Dorsolateral prefrontal cortex (tissue), 120 donors: ENCODE measurements at regions of chr15 and their contacts with region 1.

Region 1: GRCh38 chr15:52139599-52140491 is 27.3 kb upstream of the BCL2L10 start:
- DNase-seq: peak; percentile 69 to 88 (median 78)
- H3K4me3 ChIP-seq: no peak overlapping the region
- H3K27ac ChIP-seq: peak overlapping the region in 16 of 59 donors; percentile 4 to 57 (median 30)
- H3K27me3 ChIP-seq: no peaks in the 10 kb centered on the region
- CTCF ChIP-seq: peak; percentile 70 to 91 (median 82)

Region 2: DNA sequence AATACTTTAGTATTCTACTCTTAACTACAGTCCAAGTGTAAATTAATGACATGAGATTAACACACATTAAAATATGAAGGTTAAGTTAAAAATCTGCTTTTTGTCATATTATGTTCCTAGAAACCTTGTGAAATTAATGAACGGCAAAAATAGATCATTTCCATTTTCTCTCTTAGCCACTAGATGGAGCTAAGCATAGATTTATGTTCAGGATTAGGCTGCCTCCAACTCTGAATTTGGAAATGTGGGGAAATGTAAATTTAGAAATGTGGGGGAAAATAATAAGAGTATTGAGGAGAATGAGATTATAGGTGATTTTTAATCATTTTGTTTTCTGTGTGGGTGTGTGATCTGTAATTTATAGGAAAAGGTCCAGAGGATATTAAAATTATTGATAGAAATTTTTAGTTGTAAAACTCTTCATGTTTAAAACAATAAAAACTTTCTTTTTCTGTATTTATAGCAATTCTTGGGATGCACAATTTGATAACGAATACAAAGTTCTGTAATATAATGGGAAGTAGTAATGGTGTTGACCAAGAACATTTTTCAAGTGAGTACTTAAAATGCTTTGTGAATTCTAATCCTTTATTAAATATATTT is 251.2 kb before region 1 on chr15:
- intact Hi-C with region 1: loop called (anchors 1 to 10 kb)
- DNase-seq: no peak
- H3K4me3 ChIP-seq: peak overlapping the region in 1 of 59 donors; percentile 13
- H3K27ac ChIP-seq: no peak overlapping the region
- H3K27me3 ChIP-seq: no peaks in the 10 kb centered on the region
- CTCF ChIP-seq: peak; percentile 63 to 90 (median 76)

Region 3: GRCh38 chr15:51971375-51972133 is 168.3 kb before region 1 on chr15 and contains the start of gene LEO1:
- intact Hi-C with region 1: loop called in 1 of 2 experiments (anchors 5 kb)
- DNase-seq: peak; percentile 86 to 95 (median 92)
- H3K4me3 ChIP-seq: peak within 1 kb of the TSS; percentile 57 to 99 (median 91)
- H3K27ac ChIP-seq: peak within 1 kb of the TSS; percentile 58 to 98 (median 94)
- H3K27me3 ChIP-seq: no peaks in the 10 kb centered on the region
- CTCF ChIP-seq: peak in 55 of 56 donors; percentile 16 to 73 (median 55)
- total RNA-seq, gene LEO1: 14.3 to 35.5 (median 23.9) TPM

Region 4: GRCh38 chr15:51982013-51982769 is 157.7 kb before region 1 on chr15:
- intact Hi-C with region 1: loop called (anchors 5 kb)
- DNase-seq: peak in 1 of 10 donors; percentile 36
- H3K4me3 ChIP-seq: peak overlapping the region in 54 of 59 donors; percentile 2 to 60 (median 28)
- H3K27ac ChIP-seq: peak overlapping the region in 31 of 59 donors; percentile 3 to 66 (median 38)
- H3K27me3 ChIP-seq: no peaks in the 10 kb centered on the region
- CTCF ChIP-seq: peak in 53 of 56 donors; percentile 17 to 71 (median 46)